ENCODE measurements at regions of chr17 and their contacts with region 1.

Region 1: GRCh38 chr17:64306850-64307463 is 43.9 kb upstream of the TEX2 start:
- DNase-seq: peak; percentile 33
- H3K4me3 ChIP-seq: no peak overlapping the region
- H3K27ac ChIP-seq: no peak overlapping the region
- H3K4me1 ChIP-seq: peaks cover 4% of the 10 kb centered on the region
- H3K27me3 ChIP-seq: no peaks in the 10 kb centered on the region
- CTCF ChIP-seq: peak; percentile 73 to 84

Region 2: DNA sequence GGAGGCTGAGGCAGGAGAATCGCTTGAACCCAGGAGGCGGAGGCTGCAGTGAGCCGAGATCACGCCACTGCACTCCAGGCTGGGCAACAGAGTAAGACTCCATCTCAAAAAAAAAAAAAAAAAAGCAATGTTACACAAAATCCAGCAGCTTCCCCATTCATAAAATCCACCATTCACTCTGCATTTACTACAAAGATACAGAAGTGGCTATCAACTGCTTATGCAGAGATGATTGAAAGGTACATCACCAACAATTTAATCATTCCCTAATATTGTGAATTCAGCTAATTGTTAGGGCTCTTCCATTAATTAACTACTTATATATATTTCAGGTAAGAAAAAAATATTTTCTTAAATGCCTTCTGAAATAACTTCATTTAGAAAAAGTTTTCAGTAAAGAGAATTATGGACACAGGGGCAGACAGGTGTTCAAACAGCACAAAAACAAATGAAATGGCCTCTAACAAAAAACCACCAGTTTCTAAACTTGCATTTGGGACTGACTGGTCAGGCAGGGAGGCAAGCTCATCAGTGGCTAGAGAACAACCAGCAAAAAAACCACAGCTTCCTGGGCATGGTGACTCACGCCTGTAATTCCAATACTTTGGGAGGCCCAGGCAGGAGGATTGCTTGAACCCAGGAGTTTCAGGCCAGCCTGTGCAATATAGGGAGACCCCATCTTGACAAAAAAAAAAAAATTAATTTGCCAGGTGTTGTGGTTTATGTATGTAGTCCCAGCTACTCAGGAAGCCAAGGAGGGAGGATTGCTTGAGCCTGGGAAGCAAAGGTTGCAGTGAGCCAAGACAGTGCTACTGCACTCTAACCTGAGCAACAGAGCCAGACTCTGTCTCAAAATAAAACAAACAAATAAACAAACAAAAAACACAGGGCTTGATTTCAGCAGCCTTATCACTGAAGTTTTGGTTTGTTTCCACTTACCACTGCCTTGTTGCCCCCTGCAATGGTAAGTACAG is 203.3 kb before region 1 on chr17:
- CTCF ChIA-PET with region 1: no interaction called
- dilution Hi-C with region 1: no loop called
- in situ Hi-C with region 1: no loop called
- intact Hi-C with region 1: no loop called
- DNase-seq: peak; percentile 76
- H3K4me3 ChIP-seq: no peak overlapping the region
- H3K27ac ChIP-seq: no peak overlapping the region
- H3K4me1 ChIP-seq: peaks cover 26% of the 10 kb centered on the region
- H3K27me3 ChIP-seq: no peaks in the 10 kb centered on the region
- CTCF ChIP-seq: no peak

Region 3: DNA sequence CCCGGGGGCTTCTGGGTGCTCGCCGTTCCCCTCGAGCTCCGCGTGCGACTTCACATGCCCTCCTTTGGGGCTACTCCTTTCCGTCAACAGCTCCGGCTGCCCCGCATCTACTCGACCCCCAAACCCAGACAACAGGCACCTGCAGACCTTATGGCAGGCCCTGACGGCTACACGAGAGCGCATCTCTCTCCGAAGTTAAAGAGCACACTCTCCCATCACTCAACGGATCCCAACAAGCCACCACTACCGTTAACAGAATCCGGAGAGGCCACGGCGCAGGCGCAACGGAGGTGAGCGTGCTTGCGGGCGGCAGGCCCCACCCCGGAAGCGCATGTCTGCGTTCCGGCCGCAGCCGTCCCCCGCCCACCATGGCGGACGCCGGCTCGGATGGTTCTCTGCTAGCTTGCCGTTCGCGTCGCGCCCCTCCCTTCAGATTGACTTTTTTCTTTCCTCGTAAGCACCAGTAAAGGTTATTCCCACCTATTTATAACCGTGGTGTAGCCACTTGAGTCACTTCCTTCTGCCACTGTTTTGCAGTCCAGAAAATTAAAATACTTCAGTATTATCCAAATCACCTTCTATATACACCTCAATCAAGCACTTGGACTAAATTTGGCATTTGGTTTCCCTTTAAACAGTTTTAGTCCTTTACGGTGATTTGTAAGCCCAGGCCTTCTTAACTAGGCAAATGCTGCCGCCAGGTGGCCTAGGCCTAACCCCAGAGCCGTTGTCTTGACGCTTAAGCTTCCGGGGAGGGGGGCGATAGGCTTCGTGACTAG is 190.0 kb after region 1 on chr17 and contains the start of gene POLG2:
- CTCF ChIA-PET with region 1: no interaction called
- dilution Hi-C with region 1: loop called (anchors 10 kb)
- in situ Hi-C with region 1: loop called in 1 of 2 experiments (anchors 10 kb)
- intact Hi-C with region 1: no loop called
- DNase-seq: peak; percentile 93
- H3K4me3 ChIP-seq: peak within 1 kb of the TSS; percentile 48 to 77 (median 70)
- H3K27ac ChIP-seq: peak within 1 kb of the TSS; percentile 71
- H3K4me1 ChIP-seq: peaks cover 50% of the 10 kb centered on the region
- H3K27me3 ChIP-seq: no peaks in the 10 kb centered on the region
- CTCF ChIP-seq: peak; percentile 53 to 70
- total RNA-seq, gene POLG2: 3.8 to 17.7 TPM

Region 4: GRCh38 chr17:64520359-64520758 is 213.4 kb after region 1 on chr17:
- CTCF ChIA-PET with region 1: no interaction called
- dilution Hi-C with region 1: no loop called
- in situ Hi-C with region 1: no loop called
- intact Hi-C with region 1: no loop called
- DNase-seq: no peak
- H3K4me3 ChIP-seq: no peak overlapping the region
- H3K27ac ChIP-seq: no peak overlapping the region
- H3K4me1 ChIP-seq: no peaks in the 10 kb centered on the region
- H3K27me3 ChIP-seq: no peaks in the 10 kb centered on the region
- CTCF ChIP-seq: no peak